GM13976 (cell line): ENCODE measurements at regions of chr2 and their contacts with region 1.

Region 1: DNA sequence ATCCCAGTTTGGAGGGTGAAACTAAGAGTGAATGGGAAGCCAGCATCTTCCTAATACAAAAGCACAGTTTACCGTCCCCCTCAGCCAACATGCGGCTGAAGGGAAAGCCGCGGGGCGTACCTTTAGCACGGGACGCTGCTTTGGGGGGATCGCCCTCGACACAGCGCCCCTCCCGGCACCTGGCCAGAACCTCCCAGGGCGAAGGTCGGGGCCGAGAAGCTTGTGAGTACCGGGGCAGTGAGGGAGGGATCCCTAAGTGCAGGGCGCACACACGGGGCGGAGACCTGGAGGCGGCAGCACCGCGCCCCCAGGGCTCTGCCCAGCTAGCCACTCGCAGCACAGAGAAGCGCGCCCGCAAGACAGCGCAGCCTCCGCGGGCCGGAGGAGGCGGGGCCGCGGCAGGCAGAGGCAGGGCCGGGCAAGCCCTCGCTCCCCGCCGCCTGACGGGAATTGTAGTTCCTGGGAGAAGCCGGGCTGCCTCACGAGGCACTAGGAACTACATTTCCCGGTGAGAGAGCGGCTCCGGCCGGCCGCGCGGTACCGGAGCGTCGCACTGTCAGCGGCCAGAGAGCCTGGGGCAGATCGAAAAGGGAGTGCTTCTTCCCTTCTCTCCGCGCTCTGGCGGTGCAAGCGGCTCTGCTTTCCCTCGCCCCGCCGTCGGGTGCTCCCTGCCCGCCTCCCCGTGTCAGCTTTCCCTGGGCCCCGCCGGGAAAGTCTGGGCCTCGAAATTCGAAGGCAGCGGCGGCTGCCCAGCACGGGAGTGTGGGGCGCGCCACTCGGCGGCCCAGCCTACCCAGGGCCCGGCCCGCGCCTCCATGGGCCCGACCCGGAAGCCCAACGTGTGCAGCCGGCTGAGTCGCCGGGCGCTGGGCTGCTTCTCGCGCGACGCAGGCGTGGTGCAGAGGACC is at the starts of genes DCAF17 and METTL8:
- DNase-seq: peak; percentile 96
- CTCF ChIP-seq: peak; percentile 46

Region 2: DNA sequence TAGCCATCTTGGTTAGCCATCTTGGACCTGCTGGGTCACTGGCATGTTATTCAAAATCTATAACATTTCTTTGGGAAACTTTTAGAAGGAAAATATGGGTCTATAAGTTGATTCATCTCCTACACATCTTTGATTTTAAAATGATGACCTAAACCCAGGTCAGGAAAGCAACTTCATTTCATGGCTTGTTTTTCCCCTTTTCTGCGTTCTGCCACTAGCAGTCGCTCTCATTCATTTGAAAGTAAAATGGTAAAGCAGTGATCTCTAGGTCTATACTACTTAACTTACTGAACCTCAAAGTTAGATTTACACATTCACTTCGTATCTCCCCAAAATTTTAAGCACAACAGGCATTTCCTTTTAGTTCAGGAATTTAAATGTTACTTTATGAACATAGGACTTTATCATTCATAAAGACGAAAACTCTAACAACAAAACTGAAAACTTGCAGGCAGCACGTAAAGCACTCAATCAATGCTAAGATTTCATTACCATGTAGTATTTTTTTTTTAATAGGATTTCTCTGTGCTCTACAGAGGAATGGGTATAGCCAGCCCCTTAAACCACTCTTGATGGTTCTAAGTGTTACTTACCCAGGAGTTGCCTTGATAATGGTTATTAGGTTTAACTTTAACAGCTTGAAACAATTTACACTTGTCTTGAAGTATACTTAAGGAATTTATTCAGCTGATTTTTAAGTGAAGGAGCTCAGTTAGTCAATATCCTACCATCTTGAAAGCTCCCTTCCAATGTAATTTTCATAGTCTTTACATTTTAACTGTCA is 442.4 kb before region 1 on chr2:
- in situ Hi-C with region 1: loop called (anchors 25 kb)
- DNase-seq: no peak
- CTCF ChIP-seq: no peak